Vagina (tissue), 2 donors: ENCODE measurements at regions of chr16 and their contacts with region 1.

Region 1: DNA sequence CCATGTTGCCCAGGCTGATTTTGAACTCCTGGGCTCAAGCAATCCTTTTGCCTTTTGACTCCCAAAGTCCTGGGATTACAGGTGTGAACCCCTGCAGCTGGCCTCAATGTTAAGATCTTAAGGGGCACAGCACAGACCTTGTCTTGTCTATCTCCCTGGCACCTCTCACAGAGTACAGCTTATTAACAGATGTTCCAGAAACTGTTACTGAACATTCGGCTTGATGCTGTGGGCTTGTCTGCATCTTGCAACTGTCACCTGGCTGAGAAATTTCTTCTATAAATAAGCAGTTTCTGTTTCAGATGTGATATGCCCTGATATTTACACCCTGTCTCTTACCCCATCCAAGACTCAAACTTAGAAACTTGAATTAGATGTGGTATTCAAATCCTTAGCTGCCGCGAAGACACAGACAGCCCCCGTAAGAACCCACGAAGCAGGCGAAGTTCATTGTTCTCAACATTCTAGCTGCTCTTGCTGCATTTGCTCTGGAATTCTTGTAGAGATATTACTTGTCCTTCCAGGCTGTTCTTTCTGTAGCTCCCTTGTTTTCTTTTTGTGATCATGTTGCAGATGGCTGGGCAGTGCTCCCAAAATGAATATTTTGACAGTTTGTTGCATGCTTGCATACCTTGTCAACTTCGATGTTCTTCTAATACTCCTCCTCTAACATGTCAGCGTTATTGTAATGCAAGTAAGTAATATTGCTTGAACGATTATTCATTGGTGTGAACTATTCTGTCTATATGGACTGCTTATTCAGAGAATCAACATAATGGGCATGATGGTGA is at the start of gene TNFRSF17:
- DNase-seq: no peak
- H3K4me3 ChIP-seq: no peak within 1 kb of the TSS
- H3K27ac ChIP-seq: no peak within 1 kb of the TSS
- H3K4me1 ChIP-seq: no peaks in the 10 kb centered on the region
- H3K27me3 ChIP-seq: no peaks in the 10 kb centered on the region
- CTCF ChIP-seq: no peak
- POLR2A ChIP-seq: no peak
- total RNA-seq, gene TNFRSF17: not detected

Region 2: GRCh38 chr16:10859758-10860057 is 1105.2 kb before region 1 on chr16:
- intact Hi-C with region 1: loop called (anchors 10 kb)
- DNase-seq: no peak
- H3K4me3 ChIP-seq: no peak overlapping the region
- H3K27ac ChIP-seq: no peak overlapping the region
- H3K4me1 ChIP-seq: no peaks in the 10 kb centered on the region
- H3K27me3 ChIP-seq: no peaks in the 10 kb centered on the region
- CTCF ChIP-seq: no peak
- POLR2A ChIP-seq: no peak